ENCODE measurements at regions of chr14 and their contacts with region 1.

Region 1: DNA sequence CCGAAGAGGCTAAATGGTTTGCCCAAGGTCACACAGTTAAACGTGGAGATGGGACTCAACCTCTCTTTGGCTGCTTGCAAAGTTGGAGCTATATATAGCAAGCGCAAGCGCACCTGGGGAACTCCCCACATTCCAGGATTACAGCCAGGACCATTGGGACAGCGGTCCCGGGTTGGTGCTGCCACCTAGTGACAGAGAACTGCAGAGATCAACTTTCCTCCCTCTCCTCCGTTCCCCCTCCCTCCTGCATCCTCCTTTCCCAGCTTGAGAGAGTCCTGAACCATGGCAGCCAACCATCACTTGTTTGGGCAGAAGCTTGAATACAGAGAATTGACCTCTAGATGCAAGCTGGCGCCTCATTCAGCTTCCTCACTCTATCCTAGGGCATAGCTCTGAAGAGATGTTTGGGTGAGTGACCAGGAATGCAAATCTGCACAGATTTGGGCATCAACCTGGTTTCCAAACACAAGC is 17.4 kb upstream of the FLVCR2 start:
- DNase-seq: peak; percentile 56
- H3K4me3 Mint-ChIP-seq: no peak overlapping the region
- H3K27ac Mint-ChIP-seq: no peak overlapping the region
- H3K4me1 Mint-ChIP-seq: peaks cover 51% of the 10 kb centered on the region
- H3K27me3 Mint-ChIP-seq: no peaks in the 10 kb centered on the region

Region 2: DNA sequence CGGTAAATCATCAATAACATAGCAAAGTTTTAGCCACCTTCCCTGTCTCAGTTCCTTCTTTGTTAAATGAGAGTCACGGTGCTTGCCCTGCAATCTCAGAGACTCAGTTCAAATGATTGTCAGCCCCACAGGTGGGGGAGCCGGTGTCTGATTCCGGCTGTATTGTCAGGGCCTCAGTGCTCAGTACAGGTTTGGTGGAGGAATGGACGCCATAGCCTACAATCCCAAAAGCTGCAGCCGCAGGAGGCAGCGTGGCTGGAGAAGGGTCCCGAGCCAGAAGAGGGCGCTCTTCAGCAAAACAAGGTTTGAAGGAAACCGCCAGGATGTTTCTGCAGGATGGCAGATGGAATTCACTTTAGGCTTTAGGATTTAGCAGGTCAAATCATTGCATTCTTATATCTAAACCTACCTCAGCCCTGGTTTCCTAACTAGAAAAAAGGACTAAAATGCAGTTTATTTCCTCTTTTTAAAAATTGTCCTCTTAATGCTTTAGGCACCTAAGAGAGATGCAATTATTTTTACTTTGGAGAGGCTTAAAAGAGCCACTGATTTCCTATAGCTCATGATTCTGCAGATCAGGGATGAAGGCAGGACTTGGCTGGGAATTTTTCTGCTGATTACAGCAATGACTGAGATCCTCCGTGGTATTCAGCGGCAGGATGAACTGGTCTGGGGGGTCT is 253.2 kb before region 1 on chr14:
- CTCF ChIA-PET with region 1: interaction called, 32 read pairs
- DNase-seq: peak; percentile 82
- H3K4me3 Mint-ChIP-seq: no peak overlapping the region
- H3K27ac Mint-ChIP-seq: no peak overlapping the region
- H3K4me1 Mint-ChIP-seq: peaks cover 13% of the 10 kb centered on the region
- H3K27me3 Mint-ChIP-seq: peaks cover 8% of the 10 kb centered on the region

Region 3: GRCh38 chr14:75363570-75364227 is 197.3 kb before region 1 on chr14:
- CTCF ChIA-PET with region 1: no interaction called
- DNase-seq: peak; percentile 37
- H3K4me3 Mint-ChIP-seq: no peak overlapping the region
- H3K27ac Mint-ChIP-seq: peak overlapping the region; percentile 25
- H3K4me1 Mint-ChIP-seq: peaks cover 11% of the 10 kb centered on the region
- H3K27me3 Mint-ChIP-seq: peaks cover 20% of the 10 kb centered on the region

Region 4: DNA sequence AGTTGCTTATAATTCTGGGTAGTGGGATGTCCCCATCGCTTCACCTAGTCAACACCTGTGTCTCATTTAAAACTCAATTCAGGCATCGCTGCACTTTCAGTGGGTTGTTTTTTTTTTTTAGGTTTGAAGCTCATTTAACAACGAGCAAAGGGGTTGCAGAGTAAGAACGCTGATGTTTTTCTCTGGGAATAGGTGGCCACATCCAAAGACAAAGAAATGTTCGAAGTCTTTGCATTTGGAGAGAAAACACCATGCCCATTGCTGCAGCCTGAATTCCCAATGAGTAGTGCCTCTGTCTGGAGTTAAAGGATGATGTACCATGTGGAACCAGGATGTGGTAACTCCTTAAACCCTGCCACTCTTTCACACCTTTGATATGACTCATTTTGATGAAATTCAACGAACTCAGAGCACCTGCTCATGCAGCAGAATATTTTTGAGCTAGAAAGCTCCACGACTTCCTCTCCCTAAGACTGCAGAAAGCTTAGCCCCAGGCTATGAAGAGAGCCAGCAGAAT is 73.8 kb before region 1 on chr14:
- CTCF ChIA-PET with region 1: interaction called, 30 read pairs
- DNase-seq: peak; percentile 27
- H3K4me3 Mint-ChIP-seq: no peak overlapping the region
- H3K27ac Mint-ChIP-seq: peak overlapping the region; percentile 43
- H3K4me1 Mint-ChIP-seq: peaks cover 38% of the 10 kb centered on the region
- H3K27me3 Mint-ChIP-seq: peaks cover 4% of the 10 kb centered on the region

Region 5: GRCh38 chr14:75497191-75497590 is 63.8 kb before region 1 on chr14:
- CTCF ChIA-PET with region 1: interaction called, 14 read pairs
- DNase-seq: no peak
- H3K4me3 Mint-ChIP-seq: no peak overlapping the region
- H3K27ac Mint-ChIP-seq: no peak overlapping the region
- H3K4me1 Mint-ChIP-seq: peaks cover 10% of the 10 kb centered on the region
- H3K27me3 Mint-ChIP-seq: peaks cover 4% of the 10 kb centered on the region

Region 6: DNA sequence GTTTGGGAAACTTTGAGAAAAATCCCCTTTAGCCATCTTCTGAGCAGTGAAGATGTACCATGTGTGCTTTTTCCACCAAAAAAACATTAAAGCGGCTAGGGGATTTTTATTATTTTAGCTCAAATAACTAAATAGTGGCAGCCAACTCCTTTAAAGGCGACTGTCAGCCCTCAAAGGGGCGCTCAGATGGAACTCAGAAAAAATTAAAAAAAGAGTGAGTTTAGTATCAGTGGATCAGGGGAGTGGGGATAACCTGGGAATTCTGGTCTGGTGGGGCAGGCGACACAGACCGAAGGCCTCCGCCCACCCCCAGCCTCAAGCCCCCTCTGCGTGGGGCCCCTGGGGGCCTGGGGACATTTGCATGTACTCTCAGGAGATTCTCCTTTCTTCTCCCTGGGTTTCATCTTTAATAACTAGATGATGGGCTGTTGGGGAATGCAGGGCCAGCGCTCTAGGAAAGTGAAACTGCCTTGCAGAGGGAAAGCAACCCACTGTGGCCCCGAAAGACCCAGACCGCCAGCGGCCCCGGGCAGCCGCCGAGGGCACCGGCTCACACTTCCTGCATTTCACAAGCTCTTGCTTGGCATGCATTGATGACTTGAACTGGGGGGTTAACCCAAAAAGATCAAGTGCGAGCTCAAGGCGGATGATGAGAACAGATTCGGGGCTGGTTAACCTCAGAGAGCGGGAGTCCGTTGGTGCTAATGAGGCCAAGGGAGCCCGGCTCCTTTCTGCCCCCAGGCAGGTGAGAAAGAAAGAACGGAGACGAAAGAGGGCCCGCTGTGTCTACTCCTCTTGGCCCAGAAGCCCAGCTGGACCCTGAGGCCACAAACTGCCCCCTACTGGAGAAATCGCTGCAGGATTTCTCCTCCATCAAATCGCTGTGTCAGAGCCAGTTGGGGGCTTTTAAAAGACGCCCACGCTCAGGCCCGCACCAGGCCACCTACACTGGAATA is 46.0 kb before region 1 on chr14:
- CTCF ChIA-PET with region 1: interaction called, 161 read pairs
- DNase-seq: peak; percentile 53
- H3K4me3 Mint-ChIP-seq: peak overlapping the region; percentile 60
- H3K27ac Mint-ChIP-seq: peak overlapping the region; percentile 58
- H3K4me1 Mint-ChIP-seq: peaks cover 22% of the 10 kb centered on the region
- H3K27me3 Mint-ChIP-seq: peaks cover 4% of the 10 kb centered on the region

Region 7: DNA sequence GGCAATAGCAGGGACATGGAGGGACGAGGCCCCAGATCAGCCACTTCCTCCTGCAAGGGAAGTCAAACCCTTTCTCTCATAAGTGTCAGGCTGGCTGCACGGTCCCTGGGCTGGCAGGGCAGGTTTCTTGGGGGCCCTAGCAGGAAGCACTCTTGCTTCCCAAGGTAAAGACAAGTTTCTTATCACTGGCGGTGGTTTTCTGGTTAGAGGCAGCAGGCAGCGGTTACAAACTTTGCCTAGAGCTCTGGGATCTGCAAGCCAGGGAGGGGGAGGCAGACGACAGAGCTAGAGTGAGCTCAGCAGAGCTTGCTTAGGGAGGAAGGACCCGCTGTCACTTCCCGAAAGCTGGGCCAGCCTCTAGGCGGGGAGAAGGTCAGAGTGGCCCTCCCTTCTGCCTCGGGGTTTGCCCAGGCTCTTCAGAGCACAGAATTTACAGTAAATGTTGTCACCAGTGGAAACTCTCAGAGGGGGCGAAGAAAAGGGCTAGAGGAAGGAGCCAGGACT is 18.4 kb before region 1 on chr14:
- CTCF ChIA-PET with region 1: interaction called, 33 read pairs
- DNase-seq: peak; percentile 77
- H3K4me3 Mint-ChIP-seq: peak overlapping the region; percentile 66
- H3K27ac Mint-ChIP-seq: peak overlapping the region; percentile 96
- H3K4me1 Mint-ChIP-seq: peaks cover 63% of the 10 kb centered on the region
- H3K27me3 Mint-ChIP-seq: no peaks in the 10 kb centered on the region

Region 8: GRCh38 chr14:75577729-75578101 is 16.7 kb after region 1 on chr14:
- CTCF ChIA-PET with region 1: interaction called, 34 read pairs
- DNase-seq: peak; percentile 83
- H3K4me3 Mint-ChIP-seq: peak overlapping the region; percentile 81
- H3K27ac Mint-ChIP-seq: peak overlapping the region; percentile 81
- H3K4me1 Mint-ChIP-seq: peaks cover 20% of the 10 kb centered on the region
- H3K27me3 Mint-ChIP-seq: no peaks in the 10 kb centered on the region